Heart right ventricle (tissue), 16 donors: ENCODE measurements at regions of chr5 and their contacts with region 1.

Region 1: DNA sequence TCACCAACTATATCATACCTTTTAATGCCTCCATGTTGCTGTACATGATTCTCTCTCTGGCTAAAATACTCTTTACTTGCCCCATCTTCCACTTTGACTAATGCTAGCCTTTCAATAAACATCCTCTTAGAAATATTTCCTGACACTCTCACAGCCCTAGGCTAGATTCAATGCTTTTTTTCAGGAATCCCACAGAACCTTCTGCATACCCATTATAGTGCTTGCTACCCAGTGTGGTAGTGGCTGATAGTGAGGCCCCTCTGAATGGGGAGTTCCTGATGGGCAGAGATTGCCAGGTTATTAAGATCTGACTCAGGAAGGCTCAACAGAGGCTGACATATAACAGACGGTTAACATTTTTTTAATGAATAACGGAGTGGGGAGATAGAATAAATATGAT is 11.6 kb downstream of the SSBP2 start:
- DNase-seq: no peak
- ATAC-seq: no peak
- H3K4me3 ChIP-seq: no peak overlapping the region
- H3K27ac ChIP-seq: no peak overlapping the region
- H3K4me1 ChIP-seq: peaks cover 0 to 10% (median 0%) of the 10 kb centered on the region in 9 donors
- H3K27me3 ChIP-seq: no peaks in the 10 kb centered on the region
- CTCF ChIP-seq: no peak

Region 2: DNA sequence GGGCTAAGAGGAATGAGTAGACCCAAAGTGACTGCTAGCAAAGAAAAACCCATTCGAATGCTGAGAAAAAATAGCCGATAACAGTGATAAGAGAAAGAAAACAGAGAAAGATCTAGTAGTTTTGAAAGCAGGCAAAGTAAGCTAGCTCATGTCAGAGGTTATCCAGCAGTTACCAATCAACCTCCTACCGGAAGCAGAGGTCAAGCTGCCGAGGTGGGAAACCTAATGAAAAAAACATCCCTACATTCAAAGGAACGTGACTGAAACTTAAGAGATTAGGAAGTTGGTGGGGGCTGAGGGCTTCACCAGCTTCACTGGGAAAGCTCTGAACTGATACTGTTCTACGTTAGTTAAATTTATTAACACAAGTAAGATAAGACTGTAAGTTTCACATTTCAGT is 21.0 kb before region 1 on chr5:
- intact Hi-C with region 1: loop called in 1 of 10 experiments (anchors 1 kb)
- DNase-seq: no peak
- ATAC-seq: peak in 1 of 8 donors; percentile 29
- H3K4me3 ChIP-seq: no peak overlapping the region
- H3K27ac ChIP-seq: peak overlapping the region in 1 of 10 donors; percentile 3
- H3K4me1 ChIP-seq: peaks cover 0 to 77% (median 49%) of the 10 kb centered on the region in 9 donors
- H3K27me3 ChIP-seq: no peaks in the 10 kb centered on the region
- CTCF ChIP-seq: no peak